Activated CD4-positive, alpha-beta memory T cell treated with anti-CD3 and anti-CD28 coated beads for 36 hours (primary cell): ENCODE measurements at regions of chr16 and their contacts with region 1.

Region 1: GRCh38 chr16:1983544-1984346 is at the start of gene GFER:
- DNase-seq: peak; percentile 88
- H3K4me3 Mint-ChIP-seq: peak within 1 kb of the TSS; percentile 81
- H3K27ac Mint-ChIP-seq: peak within 1 kb of the TSS; percentile 58
- H3K4me1 Mint-ChIP-seq: peaks cover 15% of the 10 kb centered on the region
- H3K27me3 Mint-ChIP-seq: peaks cover 28% of the 10 kb centered on the region
- total RNA-seq, gene GFER: 34.4 to 37.5 TPM

Region 2: GRCh38 chr16:1845985-1846384 is 137.8 kb before region 1 on chr16:
- CTCF ChIA-PET with region 1: no interaction called
- POLR2A ChIA-PET with region 1: no interaction called
- intact Hi-C with region 1: no loop called
- DNase-seq: no peak
- H3K4me3 Mint-ChIP-seq: no peak overlapping the region
- H3K27ac Mint-ChIP-seq: no peak overlapping the region
- H3K4me1 Mint-ChIP-seq: no peaks in the 10 kb centered on the region
- H3K27me3 Mint-ChIP-seq: peaks cover 3% of the 10 kb centered on the region

Region 3: GRCh38 chr16:1971796-1972489 is 11.8 kb before region 1 on chr16 and contains the start of gene TBL3:
- CTCF ChIA-PET with region 1: no interaction called
- POLR2A ChIA-PET with region 1: interaction called, 15 read pairs
- intact Hi-C with region 1: no loop called
- DNase-seq: peak; percentile 98
- H3K4me3 Mint-ChIP-seq: peak within 1 kb of the TSS; percentile 100
- H3K27ac Mint-ChIP-seq: peak within 1 kb of the TSS; percentile 100
- H3K4me1 Mint-ChIP-seq: peaks cover 20% of the 10 kb centered on the region
- H3K27me3 Mint-ChIP-seq: no peaks in the 10 kb centered on the region
- total RNA-seq, gene TBL3: 45.7 to 47.3 TPM

Region 4: GRCh38 chr16:2023098-2023925 is 39.6 kb after region 1 on chr16:
- CTCF ChIA-PET with region 1: no interaction called
- POLR2A ChIA-PET with region 1: no interaction called
- intact Hi-C with region 1: no loop called
- DNase-seq: peak; percentile 96
- H3K4me3 Mint-ChIP-seq: peak overlapping the region; percentile 58
- H3K27ac Mint-ChIP-seq: no peak overlapping the region
- H3K4me1 Mint-ChIP-seq: peaks cover 17% of the 10 kb centered on the region
- H3K27me3 Mint-ChIP-seq: peaks cover 34% of the 10 kb centered on the region